Cardiac septum (tissue), 1 donor: ENCODE measurements at regions of chr20 and their contacts with region 1.

Region 1: DNA sequence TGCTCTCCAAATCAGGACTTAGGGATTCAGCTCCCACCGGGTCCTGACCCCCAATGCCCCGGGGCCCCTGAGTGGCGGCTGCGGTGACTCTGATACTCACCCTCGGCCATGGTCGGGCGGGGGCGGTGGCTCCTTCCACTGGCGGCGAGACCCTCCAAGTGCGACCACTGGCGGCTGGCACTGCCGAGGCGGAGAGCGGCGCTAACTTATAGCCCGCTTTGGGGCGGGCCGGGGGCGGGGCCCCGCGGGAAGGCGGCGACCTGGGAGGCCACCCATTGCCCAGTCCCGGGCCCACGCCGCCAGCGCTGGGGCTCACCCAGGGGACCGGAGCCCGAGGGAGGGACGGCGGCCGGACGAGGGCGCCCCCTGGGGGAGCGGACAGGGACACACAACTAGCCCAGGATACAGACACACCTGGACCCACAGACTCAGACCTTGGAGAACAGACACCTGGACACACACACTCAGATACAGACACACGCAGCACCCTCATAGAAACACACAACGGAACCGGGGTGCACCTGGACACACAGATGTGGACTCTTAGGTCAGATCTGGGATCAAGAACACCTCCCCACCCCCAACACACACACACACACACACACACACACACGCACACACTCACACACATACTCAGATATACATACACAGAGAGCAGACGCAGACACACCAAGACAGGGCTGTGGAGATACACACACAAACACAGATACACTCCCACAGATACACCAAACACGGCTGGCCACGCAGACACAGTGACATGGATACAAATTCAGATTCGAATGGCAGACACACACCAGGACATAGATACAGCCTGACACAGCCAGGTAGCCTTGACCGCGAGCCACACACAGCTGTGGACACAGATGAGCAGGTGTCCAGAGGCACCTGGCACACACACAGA is at the start of gene TGM2:
- DNase-seq: peak; percentile 90
- total RNA-seq, gene TGM2: 792 TPM

Region 2: GRCh38 chr20:38057351-38057972 is 107.9 kb before region 1 on chr20:
- intact Hi-C with region 1: loop called (anchors 2 kb)
- DNase-seq: peak; percentile 90

Region 3: DNA sequence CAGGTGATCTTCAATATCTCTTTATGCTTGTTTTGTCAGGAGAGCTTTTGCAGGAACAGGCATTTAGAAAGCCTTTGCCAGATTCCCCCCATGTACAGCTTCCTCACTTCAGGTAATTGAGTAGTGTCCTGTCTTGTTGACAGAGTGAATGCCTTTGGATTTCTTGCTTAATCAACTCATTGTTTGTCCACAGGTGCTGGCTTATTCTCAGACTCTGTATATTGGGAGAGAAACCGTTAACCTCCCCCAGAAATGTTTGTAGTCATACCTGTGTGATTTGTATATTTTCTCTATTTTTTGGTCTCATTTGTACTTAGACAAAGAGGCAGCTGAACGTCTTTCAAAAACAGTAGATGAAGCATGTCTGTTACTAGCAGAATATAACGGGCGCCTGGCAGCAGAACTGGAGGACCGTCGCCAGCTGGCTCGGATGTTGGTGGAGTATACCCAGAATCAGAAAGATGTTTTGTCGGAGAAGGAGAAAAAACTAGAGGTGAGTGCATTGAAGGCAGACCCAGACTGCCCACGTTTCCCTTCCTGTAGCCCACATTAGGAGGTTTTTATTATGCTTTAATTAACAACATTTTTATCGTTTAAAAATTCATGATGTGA is 99.5 kb before region 1 on chr20:
- intact Hi-C with region 1: loop called (anchors 2 kb)
- DNase-seq: no peak

Region 4: DNA sequence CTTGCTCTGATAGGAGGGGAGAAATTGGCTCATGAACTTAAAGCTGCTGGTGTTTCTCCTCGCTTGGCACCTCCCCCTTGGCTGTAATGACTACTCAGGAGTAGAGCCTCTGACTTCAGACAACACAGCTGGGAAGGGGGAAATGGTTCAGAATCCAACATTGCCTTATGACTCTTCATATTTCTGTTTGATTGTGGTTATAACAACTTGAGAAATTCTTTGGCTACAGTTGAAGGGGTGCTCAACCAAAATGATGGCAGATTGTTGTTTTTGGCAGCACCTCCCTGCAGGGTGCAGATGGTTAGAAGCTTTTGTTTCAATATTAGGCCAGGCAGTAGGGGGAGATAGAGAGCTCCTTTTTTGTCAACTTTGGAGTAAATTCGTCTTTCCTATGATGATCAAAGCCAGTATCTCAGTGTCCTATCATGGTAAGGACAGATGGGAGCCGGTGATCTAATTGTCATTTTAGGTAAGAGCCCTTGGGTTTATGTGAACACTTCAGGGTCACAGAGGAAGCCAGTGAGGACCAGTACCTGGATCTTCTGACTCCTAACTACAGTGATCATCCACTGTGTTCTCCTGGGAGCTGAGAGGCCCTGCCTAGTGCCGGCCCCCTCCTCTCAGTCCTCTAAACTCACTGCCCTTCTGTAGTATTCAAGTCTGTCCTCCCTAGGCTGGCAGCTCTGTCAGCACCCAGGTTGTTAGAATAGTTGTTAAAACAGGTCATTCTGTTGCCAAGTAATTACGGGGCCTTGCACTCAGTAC is 91.8 kb before region 1 on chr20:
- intact Hi-C with region 1: loop called (anchors 2 kb)
- DNase-seq: no peak

Region 5: GRCh38 chr20:38127011-38127621 is 38.2 kb before region 1 on chr20:
- intact Hi-C with region 1: no loop called
- DNase-seq: peak; percentile 75